Naive thymus-derived CD4-positive, alpha-beta T cell (primary cell): ENCODE measurements at regions of chr4 and their contacts with region 1.

Region 1: GRCh38 chr4:106266201-106266600 is 49.8 kb downstream of the TBCK start:
- DNase-seq: peak in 4 of 9 donors; percentile 1 to 15 (median 8)
- ATAC-seq: no peak
- H3K4me3 ChIP-seq: no peak overlapping the region
- H3K4me3 Mint-ChIP-seq: no peak overlapping the region
- H3K27ac ChIP-seq: no peak overlapping the region
- H3K27ac Mint-ChIP-seq: no peak overlapping the region
- H3K4me1 ChIP-seq: no peaks in the 10 kb centered on the region
- H3K4me1 Mint-ChIP-seq: peaks cover 0 to 12% (median 0%) of the 10 kb centered on the region in 7 donors
- H3K27me3 ChIP-seq: no peaks in the 10 kb centered on the region
- H3K27me3 Mint-ChIP-seq: no peaks in the 10 kb centered on the region

Region 2: DNA sequence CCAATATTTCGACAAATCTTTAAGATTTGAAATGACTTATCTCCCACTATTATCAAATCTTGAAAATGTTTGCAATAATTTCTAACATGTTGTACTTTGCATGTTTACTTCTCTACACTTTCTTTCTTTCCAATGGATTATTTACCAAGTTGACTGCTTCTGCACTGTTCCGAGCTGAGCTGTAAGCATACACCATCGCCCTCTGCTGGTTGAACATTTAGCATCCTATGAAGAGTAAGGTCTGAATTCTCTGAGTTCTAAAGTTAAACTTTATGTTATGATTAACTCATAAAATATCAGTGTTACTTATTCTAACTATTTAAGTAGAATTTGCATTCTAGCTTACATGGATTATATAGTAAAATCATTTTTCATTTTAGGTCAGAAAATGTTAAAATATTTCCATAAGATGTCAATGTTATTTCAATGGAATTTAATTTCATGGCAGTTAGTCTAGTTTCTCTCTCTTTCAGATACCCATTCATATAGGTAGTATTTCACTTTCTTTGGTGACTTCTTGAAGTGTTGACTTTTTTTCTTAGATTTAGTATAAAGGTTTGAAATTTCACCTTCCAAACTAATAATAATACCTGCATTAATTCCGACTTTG is 632.5 kb after region 1 on chr4:
- CTCF ChIA-PET with region 1: no interaction called
- POLR2A ChIA-PET with region 1: no interaction called
- intact Hi-C with region 1: loop called in 1 of 2 experiments (anchors 1 kb)
- DNase-seq: peak in 2 of 9 donors; percentile 2 to 4
- ATAC-seq: no peak
- H3K4me3 ChIP-seq: no peak overlapping the region
- H3K4me3 Mint-ChIP-seq: no peak overlapping the region
- H3K27ac ChIP-seq: no peak overlapping the region
- H3K27ac Mint-ChIP-seq: no peak overlapping the region
- H3K4me1 ChIP-seq: no peaks in the 10 kb centered on the region
- H3K4me1 Mint-ChIP-seq: no peaks in the 10 kb centered on the region
- H3K27me3 ChIP-seq: no peaks in the 10 kb centered on the region
- H3K27me3 Mint-ChIP-seq: no peaks in the 10 kb centered on the region

Region 3: DNA sequence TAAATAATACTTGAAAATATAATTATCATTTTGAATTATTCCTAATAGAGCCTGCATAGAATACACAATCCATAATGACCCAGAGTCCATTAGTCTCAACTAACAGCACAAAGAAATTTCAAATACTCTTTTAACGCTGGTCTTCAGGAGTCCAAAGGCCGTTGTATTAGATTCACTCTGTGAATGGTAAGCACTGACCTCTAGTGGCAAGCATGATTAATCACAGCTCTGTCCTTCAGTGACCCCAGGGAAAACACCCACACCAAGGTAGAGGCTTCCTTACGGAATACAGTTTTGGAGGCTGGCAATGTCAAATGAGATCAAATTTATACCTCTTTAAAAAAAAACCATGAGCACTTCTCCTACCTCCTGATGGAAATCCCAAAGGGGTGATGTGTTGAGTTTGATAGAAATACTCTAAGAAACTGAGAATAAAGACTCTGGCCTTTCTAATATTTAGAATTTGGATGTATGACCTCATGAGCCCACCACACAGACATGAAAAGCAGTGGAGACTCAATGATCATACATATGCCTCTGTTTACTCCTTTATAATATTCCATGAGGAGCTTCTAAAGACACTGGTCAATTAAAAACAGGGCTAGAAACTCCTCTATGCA is 917.1 kb after region 1 on chr4:
- CTCF ChIA-PET with region 1: no interaction called
- POLR2A ChIA-PET with region 1: no interaction called
- intact Hi-C with region 1: loop called in 1 of 2 experiments (anchors 10 kb)
- DNase-seq: peak in 1 of 9 donors; percentile 15
- ATAC-seq: peak; percentile 66
- H3K4me3 ChIP-seq: no peak overlapping the region
- H3K4me3 Mint-ChIP-seq: no peak overlapping the region
- H3K27ac ChIP-seq: no peak overlapping the region
- H3K27ac Mint-ChIP-seq: no peak overlapping the region
- H3K4me1 ChIP-seq: no peaks in the 10 kb centered on the region
- H3K4me1 Mint-ChIP-seq: no peaks in the 10 kb centered on the region
- H3K27me3 ChIP-seq: no peaks in the 10 kb centered on the region
- H3K27me3 Mint-ChIP-seq: peaks cover 5 to 11% (median 9%) of the 10 kb centered on the region in 5 donors